ENCODE measurements at regions of chr17 and their contacts with region 1.

Region 1: GRCh38 chr17:64129764-64130558 is at the start of gene ERN1:
- DNase-seq: peak; percentile 82
- H3K4me3 ChIP-seq: peak within 1 kb of the TSS; percentile 68
- H3K27ac ChIP-seq: peak within 1 kb of the TSS; percentile 93
- H3K27me3 ChIP-seq: no peaks in the 10 kb centered on the region
- CTCF ChIP-seq: no peak
- polyA plus RNA-seq, gene ERN1: 4.5 and 4.7 TPM in 2 replicates

Region 2: GRCh38 chr17:63904316-63904715 is 225.6 kb before region 1 on chr17:
- CTCF ChIA-PET with region 1: interaction called, 16 read pairs
- POLR2A ChIA-PET with region 1: no interaction called
- DNase-seq: no peak
- H3K4me3 ChIP-seq: no peak overlapping the region
- H3K27ac ChIP-seq: no peak overlapping the region
- H3K27me3 ChIP-seq: peaks cover 22% of the 10 kb centered on the region
- CTCF ChIP-seq: no peak

Region 3: DNA sequence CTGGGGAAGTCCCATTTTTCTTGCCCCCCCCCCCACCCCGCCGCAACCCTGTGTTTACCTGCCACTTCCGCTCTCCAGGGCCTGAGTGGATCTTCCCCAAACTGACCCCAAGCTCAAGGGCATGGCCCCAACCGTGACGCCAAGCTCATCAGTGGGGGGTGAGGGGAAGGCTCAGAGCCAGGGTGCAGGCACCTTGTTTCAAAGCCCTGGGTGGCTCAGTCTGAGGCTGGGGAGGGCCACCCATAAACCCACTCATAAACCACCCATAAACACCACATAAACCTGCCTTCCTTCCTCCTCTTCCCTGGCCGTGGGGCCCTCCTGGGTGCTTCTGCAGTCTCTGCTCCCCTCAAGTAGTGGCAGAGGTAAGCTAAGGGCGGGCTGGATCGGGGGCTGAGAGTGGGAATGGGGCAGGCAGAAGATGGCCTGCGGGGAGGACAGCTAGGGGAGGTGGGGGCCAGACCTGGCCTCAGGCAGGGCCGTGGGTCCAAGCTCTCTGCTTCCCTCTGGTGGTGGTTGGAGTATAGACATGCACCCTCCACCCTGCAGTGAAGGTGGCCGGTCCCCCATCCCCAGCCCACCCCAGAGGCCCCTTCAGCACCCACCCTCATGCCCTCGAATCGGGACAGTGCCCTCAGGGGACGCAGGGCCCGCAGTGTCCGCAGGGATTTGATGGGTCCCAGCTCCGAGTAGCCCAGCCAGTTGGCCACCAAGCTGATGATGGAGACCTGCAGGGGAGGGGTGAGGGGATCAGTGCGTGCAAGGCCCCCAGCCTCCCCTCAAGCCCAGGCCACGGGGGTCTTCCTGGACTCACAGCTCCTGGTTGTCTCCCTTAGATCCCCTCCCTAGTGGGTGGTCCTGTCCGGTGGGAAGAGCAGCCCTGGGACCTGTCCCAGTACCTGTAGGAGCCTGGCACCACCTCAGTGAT is 183.3 kb before region 1 on chr17:
- CTCF ChIA-PET with region 1: interaction called, 17 read pairs
- POLR2A ChIA-PET with region 1: no interaction called
- DNase-seq: no peak
- H3K4me3 ChIP-seq: no peak overlapping the region
- H3K27ac ChIP-seq: no peak overlapping the region
- H3K27me3 ChIP-seq: peaks cover 20% of the 10 kb centered on the region
- CTCF ChIP-seq: peak; percentile 73

Region 4: DNA sequence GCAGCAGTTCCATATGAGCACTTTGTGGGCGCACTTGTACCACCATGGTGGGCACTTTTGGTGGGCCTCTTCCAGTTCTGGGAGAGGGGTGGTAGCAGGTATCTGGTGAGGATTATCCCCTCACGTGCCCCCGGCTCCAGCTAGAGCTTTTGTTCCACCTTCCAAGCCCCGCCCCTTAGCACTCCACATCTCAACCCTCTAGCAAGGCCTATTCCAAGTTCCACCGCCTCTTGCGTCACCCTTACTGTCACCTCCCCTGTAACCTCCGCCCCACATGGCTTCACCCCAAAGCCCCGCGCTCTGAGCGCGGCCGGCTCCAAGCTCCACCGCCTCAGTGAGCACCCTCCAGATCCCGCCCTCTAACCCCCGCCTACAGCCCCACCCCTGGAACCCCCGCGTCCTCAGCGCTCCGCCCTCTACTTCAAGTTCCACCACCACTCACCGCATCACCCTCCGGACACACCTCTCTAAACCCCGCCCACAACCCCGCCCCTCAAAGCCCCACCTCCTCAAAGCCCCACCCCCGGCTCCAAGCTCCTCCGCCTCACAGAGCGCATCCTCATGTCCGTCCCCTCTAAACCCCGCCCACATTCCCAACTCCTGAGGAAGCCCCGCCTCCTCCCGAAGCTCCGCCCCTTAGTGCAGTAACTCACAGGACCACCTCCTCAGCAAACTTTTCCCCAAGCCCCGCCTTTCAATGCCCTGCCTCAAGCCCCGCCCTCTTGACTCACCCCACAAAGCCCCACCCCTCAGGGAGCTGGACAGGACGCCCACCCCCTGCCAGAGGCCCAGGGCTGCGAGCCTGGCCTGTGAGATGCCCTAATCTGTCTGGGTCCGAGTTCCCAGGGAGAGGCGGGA is 168.4 kb before region 1 on chr17:
- CTCF ChIA-PET with region 1: no interaction called
- POLR2A ChIA-PET with region 1: no interaction called
- DNase-seq: no peak
- H3K4me3 ChIP-seq: no peak overlapping the region
- H3K27ac ChIP-seq: no peak overlapping the region
- H3K27me3 ChIP-seq: peaks cover 5% of the 10 kb centered on the region
- CTCF ChIP-seq: no peak

Region 5: GRCh38 chr17:64041912-64042311 is 88.0 kb before region 1 on chr17:
- CTCF ChIA-PET with region 1: interaction called, 13 read pairs
- POLR2A ChIA-PET with region 1: no interaction called
- DNase-seq: no peak
- H3K4me3 ChIP-seq: no peak overlapping the region
- H3K27ac ChIP-seq: no peak overlapping the region
- H3K27me3 ChIP-seq: no peaks in the 10 kb centered on the region
- CTCF ChIP-seq: no peak

Region 6: GRCh38 chr17:64063766-64064224 is 66.2 kb before region 1 on chr17:
- CTCF ChIA-PET with region 1: interaction called, 92 read pairs
- POLR2A ChIA-PET with region 1: interaction called, 4 read pairs
- DNase-seq: no peak
- H3K4me3 ChIP-seq: no peak overlapping the region
- H3K27ac ChIP-seq: no peak overlapping the region
- H3K27me3 ChIP-seq: no peaks in the 10 kb centered on the region
- CTCF ChIP-seq: peak; percentile 46; the same call in 1 of the 2 replicates

Region 7: DNA sequence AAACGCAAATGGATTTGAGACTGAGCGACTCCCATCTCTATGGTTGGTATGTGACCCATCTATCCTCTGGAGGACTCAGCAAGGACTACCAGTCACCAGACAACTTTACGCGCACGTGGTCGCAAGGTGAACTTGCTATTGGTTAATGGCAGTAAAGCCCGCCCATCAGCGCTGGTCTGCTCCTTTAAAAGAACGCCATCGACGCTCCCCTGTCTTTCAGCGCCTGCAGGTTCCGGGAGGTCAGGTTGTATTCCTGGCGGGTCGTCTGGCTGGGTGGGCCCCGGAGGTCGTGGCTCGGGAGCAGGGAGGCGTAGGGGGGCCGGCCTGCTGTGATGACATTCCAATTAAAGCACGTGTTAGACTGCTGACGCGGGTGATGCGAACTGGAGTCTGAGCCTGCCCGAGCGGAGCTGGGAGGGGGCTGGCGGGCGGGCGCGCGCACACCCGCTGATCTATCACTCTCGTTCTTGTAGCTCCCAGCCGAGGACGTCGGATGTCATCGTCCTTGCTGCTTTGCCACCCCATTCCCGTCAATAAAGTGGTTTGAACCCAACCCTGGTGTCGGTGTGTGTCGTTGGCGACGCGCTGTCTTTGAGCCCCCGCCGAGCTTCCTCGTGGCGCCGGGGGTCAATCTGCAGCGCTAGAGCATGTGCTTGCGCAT is 15.9 kb after region 1 on chr17:
- CTCF ChIA-PET with region 1: interaction called, 15 read pairs
- POLR2A ChIA-PET with region 1: interaction called, 13 read pairs
- DNase-seq: peak; percentile 100
- H3K4me3 ChIP-seq: peak overlapping the region; percentile 89
- H3K27ac ChIP-seq: peak overlapping the region; percentile 90
- H3K27me3 ChIP-seq: no peaks in the 10 kb centered on the region
- CTCF ChIP-seq: no peak

Region 8: GRCh38 chr17:64187093-64187895 is 57.3 kb after region 1 on chr17:
- CTCF ChIA-PET with region 1: no interaction called
- POLR2A ChIA-PET with region 1: no interaction called
- DNase-seq: no peak
- H3K4me3 ChIP-seq: no peak overlapping the region
- H3K27ac ChIP-seq: no peak overlapping the region
- H3K27me3 ChIP-seq: no peaks in the 10 kb centered on the region
- CTCF ChIP-seq: no peak